WTC11 (cell line): ENCODE measurements at regions of chr12 and their contacts with region 1.

Region 1: GRCh38 chr12:6620137-6620884 is 13.1 kb upstream of the CHD4 start:
- DNase-seq: peak; percentile 88
- ATAC-seq: peak; percentile 87
- H3K4me3 Mint-ChIP-seq: peak overlapping the region; percentile 57
- H3K27ac Mint-ChIP-seq: no peak overlapping the region
- H3K4me1 Mint-ChIP-seq: peaks cover 6% of the 10 kb centered on the region; the same call in 1 of the 2 replicates
- H3K27me3 Mint-ChIP-seq: peaks cover 34% of the 10 kb centered on the region
- CTCF ChIP-seq: peak; percentile 78

Region 2: GRCh38 chr12:6494258-6494743 is 126.0 kb before region 1 on chr12:
- CTCF ChIA-PET with region 1: no interaction called
- POLR2A ChIA-PET with region 1: no interaction called
- DNase-seq: no peak
- ATAC-seq: peak; percentile 35; the same call in 1 of the 2 replicates
- H3K4me3 Mint-ChIP-seq: peak overlapping the region; percentile 93
- H3K27ac Mint-ChIP-seq: peak overlapping the region; percentile 94
- H3K4me1 Mint-ChIP-seq: peaks cover 25% of the 10 kb centered on the region
- H3K27me3 Mint-ChIP-seq: no peaks in the 10 kb centered on the region
- CTCF ChIP-seq: no peak

Region 3: GRCh38 chr12:6632026-6632983 is 12.0 kb after region 1 on chr12:
- CTCF ChIA-PET with region 1: interaction called, 25 read pairs
- POLR2A ChIA-PET with region 1: no interaction called
- DNase-seq: no peak
- ATAC-seq: no peak; the same call in 1 of the 2 replicates
- H3K4me3 Mint-ChIP-seq: no peak overlapping the region
- H3K27ac Mint-ChIP-seq: 0 out of 2 replicates have a peak overlapping the region, but pooled peaks have one; percentile 76
- H3K4me1 Mint-ChIP-seq: peaks cover 19% of the 10 kb centered on the region
- H3K27me3 Mint-ChIP-seq: peaks cover 3% of the 10 kb centered on the region
- CTCF ChIP-seq: no peak

Region 4: DNA sequence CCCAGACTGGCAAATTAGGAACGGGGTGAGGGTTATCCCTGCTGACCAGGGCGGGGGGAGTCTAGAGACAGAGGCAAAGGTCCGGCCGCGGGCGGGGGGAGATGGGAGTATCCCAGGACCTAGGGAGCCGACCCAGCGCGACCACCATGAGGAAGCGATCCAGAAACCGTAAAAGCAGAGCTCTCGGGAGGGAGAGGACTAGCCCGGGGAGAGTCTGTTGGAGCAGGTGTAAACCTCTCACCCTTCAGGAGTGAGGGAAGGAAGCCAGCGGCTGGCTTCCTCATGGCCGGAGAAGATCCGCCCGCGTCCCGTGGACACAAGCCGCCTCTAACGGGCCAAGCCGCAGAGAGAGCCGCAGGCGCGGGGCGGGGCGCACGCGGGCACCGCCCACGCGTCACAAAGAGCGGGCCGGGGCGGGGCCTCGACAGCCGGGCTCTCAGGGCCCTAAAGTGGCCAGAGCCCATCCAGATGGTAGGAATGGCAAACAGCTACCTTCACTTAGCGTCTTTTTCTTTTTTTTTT is 26.8 kb after region 1 on chr12 and contains the start of gene ACRBP:
- CTCF ChIA-PET with region 1: interaction called, 111 read pairs
- POLR2A ChIA-PET with region 1: interaction called, 3 read pairs
- DNase-seq: peak; percentile 76
- ATAC-seq: peak; percentile 92
- H3K4me3 Mint-ChIP-seq: peak within 1 kb of the TSS; percentile 87
- H3K27ac Mint-ChIP-seq: peak within 1 kb of the TSS; percentile 25
- H3K4me1 Mint-ChIP-seq: peaks cover 11% of the 10 kb centered on the region
- H3K27me3 Mint-ChIP-seq: peaks cover 29% of the 10 kb centered on the region
- CTCF ChIP-seq: no peak
- total RNA-seq, gene ACRBP: 2.1 to 4.2 TPM (median 3.2 TPM) in 3 replicates

Region 5: GRCh38 chr12:6697584-6698351 is 77.5 kb after region 1 on chr12:
- CTCF ChIA-PET with region 1: interaction called, 29 read pairs
- POLR2A ChIA-PET with region 1: no interaction called
- DNase-seq: peak; percentile 71
- ATAC-seq: peak; percentile 78
- H3K4me3 Mint-ChIP-seq: peak overlapping the region; percentile 29; the same call in 1 of the 2 replicates
- H3K27ac Mint-ChIP-seq: no peak overlapping the region; the same call in 1 of the 2 replicates
- H3K4me1 Mint-ChIP-seq: peaks cover 25% of the 10 kb centered on the region
- H3K27me3 Mint-ChIP-seq: peaks cover 43% of the 10 kb centered on the region
- CTCF ChIP-seq: peak; percentile 36; the same call in 1 of the 2 replicates

Region 6: GRCh38 chr12:6764011-6764828 is 143.9 kb after region 1 on chr12:
- CTCF ChIA-PET with region 1: interaction called, 11 read pairs
- POLR2A ChIA-PET with region 1: interaction called, 3 read pairs
- DNase-seq: peak; percentile 96
- ATAC-seq: peak; percentile 56
- H3K4me3 Mint-ChIP-seq: peak overlapping the region; percentile 62
- H3K27ac Mint-ChIP-seq: peak overlapping the region; percentile 89
- H3K4me1 Mint-ChIP-seq: peaks cover 56% of the 10 kb centered on the region
- H3K27me3 Mint-ChIP-seq: peaks cover 7% of the 10 kb centered on the region
- CTCF ChIP-seq: no peak